Ascending aorta (tissue), 2 donors: ENCODE measurements at regions of chr5 and their contacts with region 1.

Region 1: GRCh38 chr5:115625579-115626444 is at the start of gene TMED7:
- DNase-seq: peak; percentile 98 to 100
- H3K4me3 ChIP-seq: peak within 1 kb of the TSS; percentile 79 to 82
- H3K27ac ChIP-seq: peak within 1 kb of the TSS; percentile 95 to 96
- H3K4me1 ChIP-seq: peaks cover 0 to 22% of the 10 kb centered on the region in 2 donors
- H3K27me3 ChIP-seq: no peaks in the 10 kb centered on the region
- CTCF ChIP-seq: no peak
- total RNA-seq, gene TMED7: 52.0 TPM

Region 2: DNA sequence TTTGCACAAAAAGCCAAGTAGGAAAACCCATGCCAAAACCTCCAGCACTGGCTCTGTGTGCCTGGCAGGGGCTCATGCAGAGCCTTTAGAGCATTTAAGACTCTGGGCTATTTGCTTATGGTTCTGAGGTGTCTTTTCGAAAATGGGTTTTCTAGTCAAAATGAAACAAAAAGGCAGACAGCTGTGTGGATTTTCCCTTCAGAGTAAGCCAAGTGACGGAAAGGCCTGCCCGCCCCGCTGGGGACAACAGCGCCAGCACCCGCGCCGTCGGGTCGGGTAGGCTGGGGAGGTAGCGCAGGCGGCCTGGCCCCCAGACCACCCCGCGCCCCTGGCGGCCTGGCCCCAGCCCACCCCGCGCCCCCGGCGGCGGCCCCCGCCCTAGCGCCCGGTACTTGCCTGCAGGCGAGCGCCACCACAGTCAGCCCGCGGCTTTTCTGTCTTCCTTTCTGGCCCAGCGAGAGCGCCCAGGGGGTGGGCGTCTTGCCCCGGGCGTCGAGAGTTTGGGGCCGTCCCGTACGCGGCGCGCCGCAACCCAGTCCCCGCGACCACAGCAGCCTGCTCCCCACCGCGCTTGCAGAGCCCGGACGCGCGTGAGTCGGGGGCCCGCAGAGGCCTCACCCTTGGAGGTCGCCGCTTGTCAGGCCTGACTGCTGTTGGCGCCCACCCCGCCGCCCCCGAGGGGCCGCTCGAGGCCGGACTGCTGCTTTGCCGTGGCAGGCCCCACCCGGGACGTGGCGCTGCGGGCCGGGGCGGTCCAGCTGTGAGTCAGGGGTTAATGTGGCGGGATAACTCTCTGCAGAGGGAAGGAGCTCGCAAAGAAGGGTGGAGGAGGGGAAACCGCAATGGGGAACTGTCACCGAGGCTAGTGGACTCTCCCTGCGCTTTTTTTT is 23.9 kb before region 1 on chr5 and contains the start of gene TICAM2:
- intact Hi-C with region 1: loop called (anchors 1 kb)
- DNase-seq: peak; percentile 43 to 82
- H3K4me3 ChIP-seq: peak within 1 kb of the TSS; percentile 77 to 88
- H3K27ac ChIP-seq: peak within 1 kb of the TSS; percentile 93 to 95
- H3K4me1 ChIP-seq: peaks cover 0 to 14% of the 10 kb centered on the region in 2 donors
- H3K27me3 ChIP-seq: no peaks in the 10 kb centered on the region
- CTCF ChIP-seq: peak; percentile 3 to 15 (median 3)
- total RNA-seq, gene TICAM2: 0.53 TPM

Region 3: GRCh38 chr5:115841382-115842088 is 215.7 kb after region 1 on chr5 and contains the starts of genes AP3S1 and ATG12:
- intact Hi-C with region 1: loop called (anchors 2 kb)
- DNase-seq: peak; percentile 72 to 94
- H3K4me3 ChIP-seq: peak within 1 kb of the TSS; percentile 91 to 92
- H3K27ac ChIP-seq: peak within 1 kb of the TSS; percentile 94 to 96
- H3K4me1 ChIP-seq: peaks cover 5 to 36% of the 10 kb centered on the region in 2 donors
- H3K27me3 ChIP-seq: no peaks in the 10 kb centered on the region
- CTCF ChIP-seq: no peak
- total RNA-seq, gene AP3S1: 140 TPM
- total RNA-seq, gene ATG12: 30.3 TPM

Region 4: DNA sequence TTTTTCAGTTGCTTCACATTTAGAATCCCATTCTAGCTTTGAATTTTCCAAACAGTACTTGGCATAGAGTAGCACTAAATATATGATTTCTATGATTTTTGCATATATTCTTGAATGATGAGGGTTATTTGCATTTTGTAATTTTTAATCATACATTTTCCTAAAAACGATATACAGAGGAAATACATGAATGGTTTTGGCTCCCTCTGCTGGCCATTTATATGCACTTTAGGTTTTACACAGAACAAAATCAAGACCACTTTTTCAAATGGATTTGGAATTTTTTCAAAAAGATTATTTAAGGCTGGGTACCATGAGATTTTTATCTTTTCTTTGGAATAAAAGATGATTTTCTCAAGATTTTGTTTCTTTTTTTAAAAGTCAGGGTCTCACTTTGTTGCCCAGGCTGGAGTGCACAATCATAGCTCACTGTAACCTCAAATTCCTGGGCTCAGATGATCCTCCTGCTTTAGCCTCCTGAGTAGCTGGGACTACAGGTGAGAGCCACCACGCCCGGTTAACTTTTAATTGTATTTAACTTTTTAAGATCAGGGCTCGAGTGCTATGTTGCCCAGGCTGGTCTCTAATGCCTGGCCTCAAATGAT is 442.3 kb after region 1 on chr5:
- intact Hi-C with region 1: loop called (anchors 5 kb)
- DNase-seq: no peak
- H3K4me3 ChIP-seq: no peak overlapping the region
- H3K27ac ChIP-seq: no peak overlapping the region
- H3K4me1 ChIP-seq: no peaks in the 10 kb centered on the region
- H3K27me3 ChIP-seq: no peaks in the 10 kb centered on the region
- CTCF ChIP-seq: peak; percentile 39 to 84 (median 77)